ENCODE measurements at regions of chr9 and their contacts with region 1.

Region 1: GRCh38 chr9:108565651-108566378 is 290.0 kb downstream of the ACTL7B start:
- DNase-seq: peak; percentile 72
- ATAC-seq: peak; percentile 93
- H3K4me3 ChIP-seq: no peak overlapping the region
- H3K27ac ChIP-seq: no peak overlapping the region
- H3K4me1 ChIP-seq: peaks cover 0 to 7% of the 10 kb centered on the region in 2 experiments; a peak in 1 of 4 replicates
- H3K27me3 ChIP-seq: peaks cover 4% of the 10 kb centered on the region; the same call in 1 of the 2 replicates
- CTCF ChIP-seq: peak; percentile 87 to 94 (median 87)
- POLR2A ChIP-seq: no peak
- RAD21 ChIP-seq: peak; percentile 99

Region 2: DNA sequence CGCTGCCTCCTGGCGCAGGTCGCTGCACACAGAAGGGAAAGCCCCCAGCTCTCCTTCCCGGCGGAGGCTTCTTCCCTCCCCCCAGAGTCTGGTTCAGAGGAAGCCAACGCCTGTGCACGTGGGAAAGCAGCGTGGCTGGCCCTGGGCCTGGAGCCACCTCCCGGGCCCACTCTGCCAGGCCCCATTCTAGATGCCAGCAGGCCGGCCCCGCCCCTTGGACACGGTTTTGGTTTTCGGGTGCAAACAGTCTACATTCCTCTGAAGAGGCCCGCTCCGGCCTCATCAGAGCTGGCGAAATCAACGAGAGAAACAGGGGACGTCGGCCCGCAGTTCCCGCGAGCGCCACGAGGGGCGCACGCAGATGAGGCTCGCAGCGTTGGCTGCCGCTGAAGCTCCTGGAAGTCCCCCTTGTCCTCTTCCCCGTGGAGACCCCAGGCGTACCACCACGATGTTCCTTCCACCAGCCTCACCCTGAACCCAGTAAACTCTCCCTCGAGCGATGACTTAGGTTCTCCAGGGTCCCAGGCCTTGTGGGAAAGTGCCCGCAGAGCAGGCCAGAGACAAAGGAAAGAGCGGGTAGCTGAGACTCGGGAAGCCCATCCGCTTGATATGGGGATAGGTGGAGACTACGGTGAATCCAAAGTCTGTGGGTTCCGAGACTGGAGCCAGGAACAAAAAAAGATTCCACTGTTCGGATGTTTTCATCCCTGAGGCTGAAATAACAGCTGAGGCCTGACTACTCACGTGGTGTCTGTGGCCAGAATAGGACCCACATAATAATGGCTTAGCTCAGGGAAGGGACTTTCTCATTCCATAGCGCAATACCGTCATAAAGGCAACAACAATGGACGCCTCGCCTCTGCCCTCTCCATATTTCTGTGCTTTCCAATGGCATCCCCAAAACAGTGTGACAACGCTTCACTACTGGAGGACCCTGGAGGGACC is 1140.4 kb before region 1 on chr9:
- CTCF ChIA-PET with region 1: interaction called, 19 read pairs
- POLR2A ChIA-PET with region 1: no interaction called
- RAD21 ChIA-PET with region 1: interaction called in 1 of 2 experiments, 3 read pairs
- intact Hi-C with region 1: loop called (anchors 1 kb)
- DNase-seq: peak; percentile 50
- ATAC-seq: peak; percentile 75
- H3K4me3 ChIP-seq: peak overlapping the region in 1 of 2 experiments; percentile 11; a peak in 1 of 4 replicates
- H3K27ac ChIP-seq: peak overlapping the region; percentile 34
- H3K4me1 ChIP-seq: peaks cover 8 to 19% of the 10 kb centered on the region in 2 experiments; a peak in 3 of 4 replicates
- H3K27me3 ChIP-seq: no peaks in the 10 kb centered on the region
- CTCF ChIP-seq: peak; percentile 54 to 97 (median 97); a peak in 5 of 6 replicates
- POLR2A ChIP-seq: no peak
- RAD21 ChIP-seq: peak; percentile 74

Region 3: GRCh38 chr9:107749787-107750444 is 815.9 kb before region 1 on chr9:
- CTCF ChIA-PET with region 1: no interaction called
- POLR2A ChIA-PET with region 1: no interaction called
- RAD21 ChIA-PET with region 1: no interaction called
- intact Hi-C with region 1: loop called (anchors 10 kb)
- DNase-seq: peak; percentile 85
- ATAC-seq: peak; percentile 86
- H3K4me3 ChIP-seq: peak overlapping the region in 1 of 2 experiments; percentile 39; a peak in 2 of 4 replicates
- H3K27ac ChIP-seq: peak overlapping the region; percentile 88
- H3K4me1 ChIP-seq: peaks cover 44 to 62% of the 10 kb centered on the region in 2 experiments
- H3K27me3 ChIP-seq: no peaks in the 10 kb centered on the region
- CTCF ChIP-seq: no peak
- POLR2A ChIP-seq: peak; percentile 52
- RAD21 ChIP-seq: no peak

Region 4: DNA sequence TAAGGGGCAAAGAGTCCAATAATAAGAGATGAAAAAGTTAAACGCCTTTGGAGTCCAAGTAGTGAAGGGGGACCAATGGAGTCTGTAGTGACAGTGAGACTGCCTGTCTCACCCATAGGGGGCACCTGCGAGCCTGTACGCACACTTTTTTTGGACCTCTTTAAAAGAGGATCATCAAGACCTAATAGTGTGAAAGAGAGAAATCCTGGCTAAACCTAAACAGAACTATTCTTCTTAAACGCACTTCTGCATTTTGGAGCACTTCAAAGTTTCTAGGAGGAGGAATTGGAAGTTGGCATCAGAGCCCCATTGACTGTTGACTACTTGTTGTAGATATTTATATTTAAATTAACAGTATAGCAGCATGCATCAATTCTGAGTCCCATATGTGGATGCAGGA is 440.2 kb before region 1 on chr9:
- CTCF ChIA-PET with region 1: no interaction called
- POLR2A ChIA-PET with region 1: no interaction called
- RAD21 ChIA-PET with region 1: no interaction called
- intact Hi-C with region 1: loop called (anchors 10 kb)
- DNase-seq: no peak
- ATAC-seq: peak; percentile 81
- H3K4me3 ChIP-seq: no peak overlapping the region
- H3K27ac ChIP-seq: no peak overlapping the region
- H3K4me1 ChIP-seq: no peaks in the 10 kb centered on the region
- H3K27me3 ChIP-seq: no peaks in the 10 kb centered on the region
- CTCF ChIP-seq: peak in 2 of 3 experiments; percentile 68 to 81; a peak in 4 of 6 replicates
- POLR2A ChIP-seq: no peak
- RAD21 ChIP-seq: peak; percentile 41; the same call in 1 of the 2 replicates

Region 5: DNA sequence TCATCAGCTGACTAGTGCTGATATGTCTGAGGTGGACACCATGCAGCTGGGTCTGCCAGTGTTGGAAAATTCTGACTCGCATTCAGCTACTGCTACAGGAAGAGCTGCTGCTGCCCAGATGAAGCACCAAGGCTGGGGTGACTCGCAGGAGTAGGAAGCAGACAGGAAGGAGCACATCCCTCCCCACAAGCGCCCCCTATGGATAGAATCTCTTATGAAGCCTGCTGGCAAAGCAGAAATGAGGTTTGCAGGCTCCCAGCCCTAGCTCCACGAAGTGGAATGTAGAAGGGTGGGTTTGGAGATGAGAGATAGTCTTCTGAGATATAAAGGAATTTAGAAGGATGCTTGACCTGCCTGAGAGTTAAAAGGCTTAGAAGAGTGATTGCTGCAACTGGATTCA is 153.1 kb before region 1 on chr9:
- CTCF ChIA-PET with region 1: interaction called, 21 read pairs
- POLR2A ChIA-PET with region 1: no interaction called
- RAD21 ChIA-PET with region 1: interaction called, 3 to 6 read pairs
- intact Hi-C with region 1: loop called (anchors 2 kb)
- DNase-seq: no peak
- ATAC-seq: peak; percentile 34; the same call in 1 of the 2 replicates
- H3K4me3 ChIP-seq: no peak overlapping the region
- H3K27ac ChIP-seq: no peak overlapping the region
- H3K4me1 ChIP-seq: no peaks in the 10 kb centered on the region
- H3K27me3 ChIP-seq: no peaks in the 10 kb centered on the region
- CTCF ChIP-seq: peak in 2 of 3 experiments; percentile 20 to 34; a peak in 1 of 6 replicates
- POLR2A ChIP-seq: no peak
- RAD21 ChIP-seq: peak; percentile 9; the same call in 1 of the 2 replicates

Region 6: GRCh38 chr9:108535526-108535925 is 30.3 kb before region 1 on chr9:
- CTCF ChIA-PET with region 1: no interaction called
- POLR2A ChIA-PET with region 1: no interaction called
- RAD21 ChIA-PET with region 1: no interaction called
- intact Hi-C with region 1: no loop called
- DNase-seq: no peak
- ATAC-seq: peak; percentile 85
- H3K4me3 ChIP-seq: no peak overlapping the region
- H3K27ac ChIP-seq: no peak overlapping the region
- H3K4me1 ChIP-seq: peaks cover 0 to 20% of the 10 kb centered on the region in 2 experiments; a peak in 2 of 4 replicates
- H3K27me3 ChIP-seq: no peaks in the 10 kb centered on the region
- CTCF ChIP-seq: peak in 2 of 3 experiments; percentile 57 to 62; a peak in 4 of 6 replicates
- POLR2A ChIP-seq: no peak
- RAD21 ChIP-seq: peak; percentile 27

Region 7: DNA sequence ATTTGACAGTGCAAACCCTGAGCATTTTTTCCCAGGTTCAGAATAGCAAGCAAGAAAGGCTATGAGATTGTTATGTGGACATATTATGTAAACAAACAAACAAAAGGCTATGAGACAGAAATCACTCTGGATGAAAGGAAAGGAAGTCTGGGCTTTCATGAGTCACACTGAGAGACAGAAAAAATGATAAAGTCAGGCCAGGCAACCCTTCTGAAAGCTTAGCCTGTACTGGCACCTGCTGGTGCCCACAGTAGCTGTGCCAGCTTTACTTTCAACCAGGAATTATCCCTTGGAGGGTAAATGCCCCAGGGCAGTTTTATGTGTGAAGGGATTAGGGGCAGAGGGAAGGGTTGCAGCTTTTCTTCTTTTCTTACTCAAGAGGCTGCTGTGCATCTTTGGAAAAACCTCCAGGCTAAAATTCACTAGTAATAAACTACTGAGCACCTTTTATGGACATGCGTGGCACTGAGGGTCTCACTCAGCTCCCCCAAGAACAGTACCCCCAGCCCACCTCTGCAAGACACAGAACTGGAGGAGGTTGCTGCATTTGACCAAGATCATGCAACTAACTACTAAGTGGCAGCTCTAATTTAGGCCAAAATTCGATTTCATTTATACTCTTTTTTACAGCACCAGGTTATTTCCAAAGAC is 248.3 kb after region 1 on chr9:
- CTCF ChIA-PET with region 1: interaction called, 4 read pairs
- POLR2A ChIA-PET with region 1: no interaction called
- RAD21 ChIA-PET with region 1: no interaction called
- intact Hi-C with region 1: loop called (anchors 1 kb)
- DNase-seq: peak; percentile 38
- ATAC-seq: peak; percentile 79
- H3K4me3 ChIP-seq: no peak overlapping the region
- H3K27ac ChIP-seq: no peak overlapping the region
- H3K4me1 ChIP-seq: peaks cover 3 to 23% of the 10 kb centered on the region in 2 experiments; a peak in 3 of 4 replicates
- H3K27me3 ChIP-seq: no peaks in the 10 kb centered on the region
- CTCF ChIP-seq: peak; percentile 61 to 78 (median 68); a peak in 5 of 6 replicates
- POLR2A ChIP-seq: no peak
- RAD21 ChIP-seq: peak; percentile 94

Measured in HCT116 (cell line).